Activated T-helper 1 cell treated with anti-CD3 and anti-CD28 coated beads, Interleukin-12 subunit alpha, Interleukin-12 subunit beta, Interleukin-2, Interleukin-4 antibody, amounts not matched to agents 30 ng/mL and 10 ng/mL and 1 ng/mL, durations not matched to agents 14 hours and 24 hours and 36 hours (primary cell): ENCODE measurements at regions of chr2 and their contacts with region 1.

Region 1: DNA sequence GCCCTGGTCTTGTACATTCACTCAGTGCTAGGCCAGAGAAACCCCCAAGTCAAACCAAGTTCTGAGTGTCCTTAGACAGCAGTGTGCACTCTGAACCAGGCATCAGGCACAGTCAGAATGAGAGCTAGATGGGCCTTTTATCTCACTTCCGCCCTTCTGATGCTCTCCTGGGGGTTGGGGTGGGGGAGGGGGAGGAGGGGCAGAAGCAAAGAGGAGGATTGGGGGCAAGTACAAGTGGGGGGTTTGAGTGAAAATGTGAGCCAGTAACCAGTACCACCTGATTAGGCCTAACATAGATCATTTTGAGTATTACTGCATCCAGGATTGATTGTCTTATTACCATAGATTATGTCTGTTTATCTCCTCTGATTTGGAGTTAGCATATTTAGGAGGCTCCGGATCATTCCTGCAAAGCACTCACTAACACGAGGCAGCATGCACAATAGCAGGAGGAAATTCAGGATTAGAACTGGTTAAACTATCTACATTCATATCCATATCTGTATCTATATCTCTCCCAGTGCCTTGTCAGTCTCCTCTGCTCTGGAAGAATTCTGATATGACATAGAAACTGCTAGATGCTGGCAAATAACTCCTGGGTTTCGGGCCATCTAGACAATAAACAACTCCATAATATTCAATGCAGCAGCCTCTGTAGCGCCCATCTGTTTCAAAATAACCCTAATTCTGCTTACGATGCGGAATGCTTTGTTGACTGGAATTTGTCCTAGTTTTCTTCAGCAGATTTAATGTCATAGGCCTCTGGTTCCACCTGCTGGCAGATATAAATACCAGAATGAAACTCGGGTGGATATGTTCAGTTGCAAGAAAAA is 149.1 kb downstream of the RHBDD1 start:
- DNase-seq: peak; percentile 9
- H3K4me3 Mint-ChIP-seq: no peak overlapping the region
- H3K27ac Mint-ChIP-seq: no peak overlapping the region
- H3K4me1 Mint-ChIP-seq: peaks cover 21% of the 10 kb centered on the region
- H3K27me3 Mint-ChIP-seq: no peaks in the 10 kb centered on the region

Region 2: DNA sequence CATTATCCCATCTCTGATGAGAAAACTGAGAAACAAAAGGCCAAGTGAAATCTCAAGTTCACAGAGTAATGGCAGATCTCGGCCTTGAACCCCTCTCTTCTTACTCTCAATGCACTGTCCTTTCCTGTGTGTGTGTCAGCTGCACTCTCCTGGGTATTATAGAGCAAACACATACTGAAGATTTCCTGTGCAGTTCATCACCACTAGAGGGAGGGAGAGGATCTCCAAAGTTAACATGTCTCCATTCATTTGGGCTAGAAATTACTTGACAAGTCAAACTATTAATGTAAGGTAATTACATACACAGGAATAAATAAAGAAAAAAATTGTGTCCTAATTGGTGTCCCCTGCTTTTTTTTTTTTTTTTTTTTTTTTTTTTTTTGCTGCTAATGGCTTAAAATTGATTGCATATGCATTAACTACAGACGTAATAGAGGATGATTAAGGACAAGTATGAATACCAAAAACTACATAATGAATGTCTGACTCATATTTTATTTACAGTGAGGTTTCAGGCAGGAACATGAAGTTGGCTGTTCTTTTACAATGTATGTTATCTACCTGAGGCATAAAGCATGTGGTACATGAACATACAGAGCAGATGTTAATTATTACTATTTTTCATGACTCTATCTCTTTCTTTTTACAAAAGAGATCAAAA is 1316.2 kb before region 1 on chr2:
- intact Hi-C with region 1: loop called (anchors 1 kb)
- DNase-seq: no peak
- H3K4me3 Mint-ChIP-seq: no peak overlapping the region
- H3K27ac Mint-ChIP-seq: no peak overlapping the region
- H3K4me1 Mint-ChIP-seq: no peaks in the 10 kb centered on the region
- H3K27me3 Mint-ChIP-seq: peaks cover 5% of the 10 kb centered on the region

Region 3: DNA sequence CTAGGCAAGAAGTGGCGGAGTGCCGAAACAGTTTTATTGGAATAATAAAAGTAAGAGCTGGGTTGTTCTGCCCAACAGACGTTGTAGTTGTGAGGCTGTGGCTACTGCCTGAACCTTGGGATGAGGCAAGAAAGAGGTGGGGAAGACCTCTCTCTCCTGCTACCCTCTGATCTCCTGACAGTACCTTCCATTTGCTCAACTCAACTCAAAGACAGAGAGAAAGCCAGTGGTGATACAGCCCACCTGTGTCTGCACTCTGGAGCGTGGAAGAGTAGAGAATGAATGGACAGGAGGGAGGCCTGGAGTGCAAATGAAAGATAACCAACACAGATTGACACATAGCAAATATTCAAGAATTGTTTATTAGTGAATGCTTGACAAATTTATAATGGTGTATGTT is 995.2 kb before region 1 on chr2:
- intact Hi-C with region 1: loop called (anchors 5 kb)
- DNase-seq: no peak
- H3K4me3 Mint-ChIP-seq: no peak overlapping the region
- H3K27ac Mint-ChIP-seq: no peak overlapping the region
- H3K4me1 Mint-ChIP-seq: no peaks in the 10 kb centered on the region
- H3K27me3 Mint-ChIP-seq: no peaks in the 10 kb centered on the region

Region 4: DNA sequence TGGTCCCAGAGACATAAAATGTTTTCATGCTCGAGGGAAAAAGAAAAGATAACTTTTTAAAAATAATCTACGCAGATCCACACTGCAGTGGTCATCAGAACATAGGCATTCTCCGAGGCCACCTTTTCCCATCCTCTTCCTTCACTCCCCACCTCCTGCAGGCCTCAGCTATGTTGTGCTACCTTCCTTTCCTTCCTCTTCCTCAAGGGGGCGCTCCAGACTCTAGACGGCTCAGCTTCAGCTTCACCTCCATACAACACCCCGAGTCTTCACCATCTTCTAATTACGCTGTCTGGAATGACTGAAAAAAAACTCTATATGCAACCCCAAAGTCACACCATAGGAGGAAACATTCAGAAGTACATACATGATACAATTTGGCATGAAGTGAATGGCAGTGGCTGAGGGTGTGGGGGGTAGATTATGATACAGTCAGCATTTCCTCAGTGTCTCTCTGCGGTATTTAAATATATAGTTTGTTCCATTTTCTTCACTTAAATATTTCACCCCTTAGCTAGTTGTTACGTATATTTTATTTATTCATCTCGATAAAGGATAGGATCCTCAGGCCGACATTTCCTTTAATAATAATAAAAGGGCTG is 769.0 kb before region 1 on chr2:
- intact Hi-C with region 1: loop called (anchors 1 kb)
- DNase-seq: peak; percentile 41
- H3K4me3 Mint-ChIP-seq: no peak overlapping the region
- H3K27ac Mint-ChIP-seq: no peak overlapping the region
- H3K4me1 Mint-ChIP-seq: peaks cover 6% of the 10 kb centered on the region
- H3K27me3 Mint-ChIP-seq: peaks cover 11% of the 10 kb centered on the region

Region 5: GRCh38 chr2:226813148-226813701 is 171.7 kb before region 1 on chr2:
- intact Hi-C with region 1: loop called (anchors 1 kb)
- DNase-seq: no peak
- H3K4me3 Mint-ChIP-seq: no peak overlapping the region
- H3K27ac Mint-ChIP-seq: no peak overlapping the region
- H3K4me1 Mint-ChIP-seq: no peaks in the 10 kb centered on the region
- H3K27me3 Mint-ChIP-seq: peaks cover 34% of the 10 kb centered on the region